Breast epithelium (tissue), 4 donors: ENCODE measurements at regions of chr3 and their contacts with region 1.

Region 1: GRCh38 chr3:79436387-79436786 is 331.4 kb downstream of the ROBO1 start:
- DNase-seq: no peak
- H3K4me3 ChIP-seq: no peak overlapping the region
- H3K27ac ChIP-seq: no peak overlapping the region
- H3K4me1 ChIP-seq: no peaks in the 10 kb centered on the region
- H3K27me3 ChIP-seq: no peaks in the 10 kb centered on the region
- CTCF ChIP-seq: no peak
- POLR2A ChIP-seq: no peak

Region 2: DNA sequence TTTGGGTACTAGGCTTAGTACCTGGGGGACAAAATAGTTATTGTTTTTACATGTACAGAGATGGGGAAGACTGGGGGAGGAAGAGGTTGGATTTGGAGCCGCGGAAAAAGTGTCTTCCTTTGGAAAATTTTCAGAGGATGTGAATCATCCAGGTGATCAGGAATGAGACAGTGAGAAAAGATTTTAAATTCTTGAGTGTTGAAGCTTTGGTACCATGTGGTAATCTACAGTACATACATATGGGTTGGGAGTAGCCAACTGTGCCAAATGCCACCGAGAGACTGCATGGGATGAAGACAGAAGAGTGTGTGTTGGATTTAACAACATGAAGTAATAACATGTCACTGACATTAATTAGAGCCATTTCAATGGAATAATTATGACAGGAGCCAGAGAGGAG is 906.8 kb before region 1 on chr3:
- intact Hi-C with region 1: loop called (anchors 10 kb)
- DNase-seq: no peak
- H3K4me3 ChIP-seq: no peak overlapping the region
- H3K27ac ChIP-seq: no peak overlapping the region
- H3K4me1 ChIP-seq: no peaks in the 10 kb centered on the region
- H3K27me3 ChIP-seq: no peaks in the 10 kb centered on the region
- CTCF ChIP-seq: no peak
- POLR2A ChIP-seq: no peak